Natural killer cell (primary cell): ENCODE measurements at regions of chr3 and their contacts with region 1.

Region 1: GRCh38 chr3:172106989-172107388 is 67.6 kb downstream of the FNDC3B start:
- DNase-seq: peak; percentile 72 to 89
- ATAC-seq: peak; percentile 35 to 71 (median 71)
- H3K4me3 ChIP-seq: no peak overlapping the region
- H3K4me3 Mint-ChIP-seq: peak overlapping the region; percentile 92
- H3K27ac ChIP-seq: peak overlapping the region; percentile 78
- H3K27ac Mint-ChIP-seq: peak overlapping the region; percentile 98 to 99
- H3K4me1 ChIP-seq: peaks cover 60% of the 10 kb centered on the region
- H3K4me1 Mint-ChIP-seq: peaks cover 77 to 78% of the 10 kb centered on the region in 2 donors
- H3K27me3 ChIP-seq: no peaks in the 10 kb centered on the region
- H3K27me3 Mint-ChIP-seq: peaks cover 0 to 3% of the 10 kb centered on the region in 2 donors
- CTCF ChIP-seq: no peak

Region 2: GRCh38 chr3:171980578-171981270 is 126.3 kb before region 1 on chr3:
- intact Hi-C with region 1: loop called (anchors 2 kb)
- DNase-seq: peak; percentile 27 to 43
- ATAC-seq: peak; percentile 97 to 99 (median 97)
- H3K4me3 ChIP-seq: no peak overlapping the region
- H3K4me3 Mint-ChIP-seq: peak overlapping the region; percentile 75
- H3K27ac ChIP-seq: peak overlapping the region; percentile 23
- H3K27ac Mint-ChIP-seq: peak overlapping the region; percentile 87 to 88
- H3K4me1 ChIP-seq: peaks cover 20% of the 10 kb centered on the region
- H3K4me1 Mint-ChIP-seq: peaks cover 39 to 48% of the 10 kb centered on the region in 2 donors
- H3K27me3 ChIP-seq: no peaks in the 10 kb centered on the region
- H3K27me3 Mint-ChIP-seq: no peaks in the 10 kb centered on the region
- CTCF ChIP-seq: no peak

Region 3: DNA sequence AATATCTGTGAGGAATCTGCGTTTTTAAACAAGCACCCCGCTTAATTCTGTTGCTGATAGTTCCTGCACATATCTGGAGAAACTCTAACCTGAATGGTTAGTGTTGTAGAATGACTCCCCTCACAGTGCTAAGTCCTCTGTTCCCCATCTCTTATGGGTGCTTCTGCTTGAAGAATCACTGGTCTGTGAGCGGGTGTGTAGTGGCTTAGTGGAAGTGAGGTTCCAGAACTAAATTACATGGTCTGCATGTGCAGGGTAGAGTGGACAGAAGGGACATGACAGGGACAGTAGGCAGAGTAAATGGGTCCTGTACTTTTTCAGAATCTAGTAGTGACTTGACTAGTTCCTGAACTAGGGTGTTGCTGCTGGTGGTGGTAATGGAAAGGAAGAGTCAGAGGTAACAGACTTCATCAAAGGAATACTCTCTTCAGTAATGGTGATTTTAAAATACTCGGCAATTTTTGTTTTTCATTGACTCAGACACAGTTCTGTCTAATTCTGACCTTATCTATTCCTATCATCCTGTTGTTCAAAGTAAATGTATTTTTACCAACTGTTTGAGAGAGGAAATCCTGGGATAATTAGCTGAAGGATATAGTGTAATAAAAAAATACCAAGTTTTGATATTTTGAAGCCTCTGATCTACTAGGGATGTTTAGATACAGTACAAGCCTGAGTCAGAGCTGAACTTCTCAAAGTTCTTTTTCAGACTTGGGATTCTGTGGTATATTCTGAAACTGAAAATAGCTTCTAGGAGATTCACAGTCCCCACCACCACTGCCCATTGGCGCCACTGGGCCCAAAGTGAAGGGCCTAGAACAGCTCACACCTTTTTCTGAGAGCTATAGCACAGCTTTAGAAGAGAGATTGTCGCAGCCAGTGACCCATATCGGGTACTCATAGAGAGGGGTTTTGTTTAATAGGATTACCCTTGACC is 12.1 kb before region 1 on chr3:
- intact Hi-C with region 1: loop called (anchors 1 kb)
- DNase-seq: peak; percentile 25 to 61
- ATAC-seq: peak; percentile 82 to 93 (median 90)
- H3K4me3 ChIP-seq: no peak overlapping the region
- H3K4me3 Mint-ChIP-seq: peak overlapping the region; percentile 67
- H3K27ac ChIP-seq: peak overlapping the region; percentile 62
- H3K27ac Mint-ChIP-seq: peak overlapping the region; percentile 80 to 92
- H3K4me1 ChIP-seq: peaks cover 17% of the 10 kb centered on the region
- H3K4me1 Mint-ChIP-seq: peaks cover 79 to 80% of the 10 kb centered on the region in 2 donors
- H3K27me3 ChIP-seq: no peaks in the 10 kb centered on the region
- H3K27me3 Mint-ChIP-seq: no peaks in the 10 kb centered on the region
- CTCF ChIP-seq: no peak

Region 4: GRCh38 chr3:172142051-172142863 is 35.3 kb after region 1 on chr3:
- intact Hi-C with region 1: loop called (anchors 5 kb)
- DNase-seq: no peak
- ATAC-seq: peak; percentile 22 to 47 (median 43)
- H3K4me3 ChIP-seq: no peak overlapping the region
- H3K4me3 Mint-ChIP-seq: peak overlapping the region; percentile 78
- H3K27ac ChIP-seq: peak overlapping the region; percentile 72
- H3K27ac Mint-ChIP-seq: peak overlapping the region; percentile 82 to 88
- H3K4me1 ChIP-seq: peaks cover 51% of the 10 kb centered on the region
- H3K4me1 Mint-ChIP-seq: peaks cover 87 to 88% of the 10 kb centered on the region in 2 donors
- H3K27me3 ChIP-seq: no peaks in the 10 kb centered on the region
- H3K27me3 Mint-ChIP-seq: no peaks in the 10 kb centered on the region
- CTCF ChIP-seq: no peak

Region 5: GRCh38 chr3:172208586-172209332 is 101.8 kb after region 1 on chr3:
- intact Hi-C with region 1: loop called (anchors 10 kb)
- DNase-seq: peak in 1 of 2 donors; percentile 23
- ATAC-seq: peak; percentile 73 to 78 (median 76)
- H3K4me3 ChIP-seq: no peak overlapping the region
- H3K4me3 Mint-ChIP-seq: peak overlapping the region; percentile 62
- H3K27ac ChIP-seq: peak overlapping the region; percentile 46
- H3K27ac Mint-ChIP-seq: peak overlapping the region; percentile 68 to 86
- H3K4me1 ChIP-seq: peaks cover 18% of the 10 kb centered on the region
- H3K4me1 Mint-ChIP-seq: peaks cover 69 to 72% of the 10 kb centered on the region in 2 donors
- H3K27me3 ChIP-seq: no peaks in the 10 kb centered on the region
- H3K27me3 Mint-ChIP-seq: no peaks in the 10 kb centered on the region
- CTCF ChIP-seq: no peak